WTC11 (cell line): ENCODE measurements at regions of chrX and their contacts with region 1.

Region 1: DNA sequence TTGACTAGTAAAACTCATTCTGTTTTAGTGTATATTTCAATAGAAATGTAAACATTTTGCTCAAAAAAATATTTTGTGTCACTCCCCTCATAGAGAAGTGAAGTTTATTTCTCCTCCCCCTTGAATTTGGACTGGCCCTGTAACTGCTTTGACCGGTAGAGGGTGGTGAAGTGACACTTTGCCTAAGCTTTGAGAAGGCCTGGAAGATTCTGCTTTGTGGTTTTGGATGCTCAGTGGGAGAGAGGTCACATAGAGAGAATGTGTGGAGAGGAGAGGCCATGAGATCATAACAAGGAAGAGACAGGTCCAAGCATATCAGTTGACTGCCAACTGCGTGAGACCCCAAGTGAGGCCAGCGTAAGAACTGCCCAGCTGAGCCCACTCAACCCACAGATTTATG is 19.1 kb upstream of the ARX start:
- DNase-seq: no peak
- ATAC-seq: peak; percentile 87
- H3K4me3 Mint-ChIP-seq: no peak overlapping the region
- H3K27ac Mint-ChIP-seq: no peak overlapping the region
- H3K4me1 Mint-ChIP-seq: peaks cover 3% of the 10 kb centered on the region; the same call in 1 of the 2 replicates
- H3K27me3 Mint-ChIP-seq: no peaks in the 10 kb centered on the region
- CTCF ChIP-seq: no peak

Region 2: DNA sequence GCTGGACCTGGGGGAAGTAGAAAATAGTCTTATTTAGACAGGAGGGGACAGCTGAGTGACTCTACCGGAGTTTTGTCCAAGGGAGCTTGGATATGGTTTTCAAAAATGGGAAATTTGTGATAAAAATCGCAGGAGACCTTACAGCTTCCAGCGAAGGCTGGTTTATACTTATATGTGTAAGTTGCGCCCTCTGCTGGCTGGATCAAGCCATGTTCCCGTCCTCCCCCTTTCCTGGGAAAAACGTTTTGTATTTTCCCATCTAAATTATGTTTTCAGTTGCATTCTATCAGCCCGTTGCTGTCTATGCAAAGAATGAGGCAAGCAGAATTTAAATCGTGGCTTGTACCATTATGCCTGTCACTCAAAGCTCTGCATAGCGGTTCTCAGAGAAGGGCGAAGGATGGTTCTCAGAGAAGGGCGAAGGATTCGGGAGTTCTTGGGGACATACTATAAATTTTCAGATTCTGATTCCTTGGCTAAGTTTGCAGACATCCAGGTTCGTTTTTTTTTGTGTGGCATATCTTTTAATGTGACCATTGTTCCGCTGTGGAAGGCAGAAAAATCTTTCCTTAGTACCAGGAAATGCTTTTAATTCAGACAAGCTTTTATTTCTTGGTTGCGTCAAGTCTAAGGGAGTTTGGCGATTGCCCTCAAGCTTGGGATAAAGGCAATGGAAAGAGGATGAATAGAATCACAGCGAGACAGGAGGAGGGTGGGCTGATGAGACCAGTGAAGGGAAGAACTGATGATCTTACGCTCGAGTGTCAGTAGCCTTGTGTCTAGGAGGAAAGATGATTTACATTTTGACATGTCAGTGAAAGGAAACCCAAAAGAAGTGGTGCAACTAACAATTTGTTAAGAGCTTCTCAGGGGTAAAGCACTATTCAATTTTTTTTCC is 109.4 kb after region 1 on chrX:
- CTCF ChIA-PET with region 1: interaction called, 33 read pairs
- POLR2A ChIA-PET with region 1: no interaction called
- DNase-seq: peak; percentile 55
- ATAC-seq: peak; percentile 65; the same call in 1 of the 2 replicates
- H3K4me3 Mint-ChIP-seq: peak overlapping the region; percentile 48
- H3K27ac Mint-ChIP-seq: no peak overlapping the region
- H3K4me1 Mint-ChIP-seq: peaks cover 25% of the 10 kb centered on the region
- H3K27me3 Mint-ChIP-seq: no peaks in the 10 kb centered on the region
- CTCF ChIP-seq: peak; percentile 65